Endothelial cell of umbilical vein (primary cell): ENCODE measurements at regions of chr7 and their contacts with region 1.

Region 1: GRCh38 chr7:93279541-93279940 is 47.4 kb downstream of the VPS50 start:
- DNase-seq: peak; percentile 85
- H3K4me3 ChIP-seq: no peak overlapping the region
- H3K27ac ChIP-seq: peak overlapping the region; percentile 0
- H3K4me1 ChIP-seq: peaks cover 16% of the 10 kb centered on the region
- H3K27me3 ChIP-seq: no peaks in the 10 kb centered on the region
- CTCF ChIP-seq: no peak
- POLR2A ChIP-seq: no peak

Region 2: DNA sequence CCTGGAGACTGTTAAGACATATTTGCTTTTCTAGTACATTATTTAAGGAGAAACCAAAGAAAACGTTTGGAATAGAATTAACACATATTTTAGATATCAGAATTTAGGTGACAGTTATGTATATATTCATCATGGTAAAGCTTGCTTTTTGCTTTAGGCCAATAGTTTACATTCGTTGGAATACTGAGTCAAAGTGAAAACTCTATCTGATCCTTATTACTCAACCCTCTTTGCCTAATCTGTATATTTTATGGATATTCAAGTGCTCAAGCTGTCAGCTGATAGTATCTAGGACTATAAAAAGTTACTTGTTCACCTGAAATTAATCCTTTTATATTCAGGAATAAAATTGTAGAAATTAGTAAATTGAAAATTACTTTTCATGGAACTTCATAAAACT is 13.7 kb after region 1 on chr7:
- CTCF ChIA-PET with region 1: interaction called, 11 read pairs
- POLR2A ChIA-PET with region 1: no interaction called
- dilution Hi-C with region 1: no loop called
- intact Hi-C with region 1: no loop called
- DNase-seq: no peak
- H3K4me3 ChIP-seq: no peak overlapping the region
- H3K27ac ChIP-seq: no peak overlapping the region
- H3K4me1 ChIP-seq: no peaks in the 10 kb centered on the region
- H3K27me3 ChIP-seq: no peaks in the 10 kb centered on the region
- CTCF ChIP-seq: no peak
- POLR2A ChIP-seq: no peak

Region 3: GRCh38 chr7:93310346-93310745 is 30.8 kb after region 1 on chr7:
- CTCF ChIA-PET with region 1: no interaction called
- POLR2A ChIA-PET with region 1: no interaction called
- dilution Hi-C with region 1: no loop called
- intact Hi-C with region 1: no loop called
- DNase-seq: peak; percentile 4
- H3K4me3 ChIP-seq: no peak overlapping the region
- H3K27ac ChIP-seq: no peak overlapping the region
- H3K4me1 ChIP-seq: peaks cover 3% of the 10 kb centered on the region
- H3K27me3 ChIP-seq: no peaks in the 10 kb centered on the region
- CTCF ChIP-seq: no peak
- POLR2A ChIP-seq: no peak

Region 4: GRCh38 chr7:93382362-93382761 is 102.8 kb after region 1 on chr7:
- CTCF ChIA-PET with region 1: no interaction called
- POLR2A ChIA-PET with region 1: no interaction called
- dilution Hi-C with region 1: no loop called
- intact Hi-C with region 1: no loop called
- DNase-seq: no peak
- H3K4me3 ChIP-seq: no peak overlapping the region
- H3K27ac ChIP-seq: no peak overlapping the region
- H3K4me1 ChIP-seq: no peaks in the 10 kb centered on the region
- H3K27me3 ChIP-seq: peaks cover 5 to 12% of the 10 kb centered on the region in 2 experiments
- CTCF ChIP-seq: no peak
- POLR2A ChIP-seq: no peak